HepG2 (cell line): ENCODE measurements at regions of chr16 and their contacts with region 1.

Region 1: DNA sequence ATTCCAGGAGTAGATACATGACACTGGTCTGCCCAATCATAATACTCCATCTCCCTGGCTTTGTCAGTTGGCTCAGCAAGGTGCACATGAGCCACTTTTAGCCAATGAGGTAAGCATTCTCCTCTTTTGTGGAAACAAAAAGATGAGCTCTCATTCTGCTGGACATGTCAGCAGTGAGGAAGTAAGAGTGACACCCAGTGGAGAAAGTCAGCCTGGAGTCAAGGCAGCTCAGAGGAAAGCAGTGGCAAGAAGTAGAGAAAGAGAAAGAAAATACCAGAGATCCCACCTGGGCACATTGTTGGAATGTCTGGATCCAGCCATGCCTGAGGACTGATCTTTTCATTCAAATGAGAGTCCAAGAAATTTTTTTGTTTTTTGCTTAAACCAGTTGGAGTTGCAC is 496.9 kb upstream of the C16orf82 start:
- DNase-seq: peak; percentile 15
- ATAC-seq: peak; percentile 84
- H3K4me3 ChIP-seq: no peak overlapping the region
- H3K27ac ChIP-seq: no peak overlapping the region
- H3K4me1 ChIP-seq: no peaks in the 10 kb centered on the region
- H3K27me3 ChIP-seq: no peaks in the 10 kb centered on the region
- CTCF ChIP-seq: peak; percentile 64
- EP300 ChIP-seq: no peak
- POLR2A ChIP-seq: no peak
- RAD21 ChIP-seq: no peak

Region 2: DNA sequence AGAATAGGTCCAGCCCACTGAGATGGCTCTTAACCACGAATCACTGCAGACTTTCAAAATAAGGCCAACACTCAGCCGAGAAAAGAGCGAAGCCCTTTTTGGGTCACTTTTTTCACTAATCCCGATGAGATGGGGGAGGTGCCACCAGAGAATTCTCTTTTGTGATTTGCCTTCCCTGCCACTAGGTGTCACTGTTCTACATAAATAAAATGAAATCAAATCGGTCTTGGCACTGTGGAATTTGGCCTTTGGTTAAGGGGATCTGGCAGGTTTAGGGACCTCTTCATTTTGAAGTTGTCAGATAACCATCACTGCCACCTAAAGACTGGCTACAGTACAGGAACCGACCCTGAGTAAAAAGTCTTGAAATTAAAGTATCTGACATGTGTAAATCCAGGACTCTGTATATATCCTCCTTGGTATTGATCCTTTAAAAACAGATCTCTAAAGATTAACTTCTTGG is 731.0 kb before region 1 on chr16:
- CTCF ChIA-PET with region 1: interaction called, 7 read pairs
- POLR2A ChIA-PET with region 1: no interaction called
- in situ Hi-C with region 1: loop called (anchors 25 kb)
- intact Hi-C with region 1: loop called (anchors 5 kb)
- DNase-seq: peak; percentile 69
- ATAC-seq: peak; percentile 51; the same call in 1 of the 3 replicates
- H3K4me3 ChIP-seq: no peak overlapping the region
- H3K27ac ChIP-seq: no peak overlapping the region
- H3K4me1 ChIP-seq: no peaks in the 10 kb centered on the region
- H3K27me3 ChIP-seq: peaks cover 0 to 4% of the 10 kb centered on the region in 2 experiments; a peak in 1 of 5 replicates
- CTCF ChIP-seq: peak; percentile 77
- EP300 ChIP-seq: no peak
- POLR2A ChIP-seq: no peak
- RAD21 ChIP-seq: 0 out of 2 replicates have a peak, but pooled peaks have one; percentile 20

Region 3: DNA sequence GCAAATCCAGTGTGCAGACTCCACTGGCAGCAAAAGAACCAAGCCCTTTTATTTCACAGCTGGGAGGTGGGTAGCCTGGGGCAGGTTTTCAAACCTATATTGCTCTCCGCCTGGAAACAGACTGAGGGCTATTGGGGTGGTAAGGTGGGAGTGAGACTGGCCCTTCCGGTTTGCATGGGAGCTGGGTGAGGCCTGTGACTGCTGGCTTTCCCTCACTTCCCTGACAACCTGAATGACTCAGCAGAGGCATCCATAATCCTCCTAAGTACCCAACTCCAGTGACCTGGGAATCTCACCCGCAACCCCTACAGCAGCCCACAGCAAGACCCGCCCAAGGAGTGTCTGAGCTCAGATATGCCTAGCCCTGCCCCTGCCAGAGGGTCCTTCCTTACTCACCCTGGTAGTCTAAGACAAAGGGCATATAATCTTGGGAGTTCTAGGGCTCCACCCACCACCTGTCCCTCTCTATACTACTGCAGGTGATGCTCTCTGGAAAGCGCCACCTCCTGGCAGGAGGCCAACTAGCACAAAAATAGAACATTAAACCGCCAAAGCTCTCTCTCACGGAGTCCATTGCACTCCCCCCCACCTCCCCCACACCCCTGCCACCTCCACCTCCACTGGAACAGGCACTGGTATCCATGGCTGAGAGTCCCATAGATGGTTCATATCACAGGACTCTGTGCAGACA is 105.1 kb before region 1 on chr16:
- CTCF ChIA-PET with region 1: no interaction called
- POLR2A ChIA-PET with region 1: no interaction called
- in situ Hi-C with region 1: no loop called
- intact Hi-C with region 1: no loop called
- DNase-seq: no peak
- ATAC-seq: no peak
- H3K4me3 ChIP-seq: no peak overlapping the region
- H3K27ac ChIP-seq: no peak overlapping the region
- H3K4me1 ChIP-seq: no peaks in the 10 kb centered on the region
- H3K27me3 ChIP-seq: no peaks in the 10 kb centered on the region
- CTCF ChIP-seq: no peak
- EP300 ChIP-seq: no peak
- POLR2A ChIP-seq: no peak
- RAD21 ChIP-seq: no peak